IMR-90 (cell line): ENCODE measurements at regions of chr3 and their contacts with region 1.

Region 1: DNA sequence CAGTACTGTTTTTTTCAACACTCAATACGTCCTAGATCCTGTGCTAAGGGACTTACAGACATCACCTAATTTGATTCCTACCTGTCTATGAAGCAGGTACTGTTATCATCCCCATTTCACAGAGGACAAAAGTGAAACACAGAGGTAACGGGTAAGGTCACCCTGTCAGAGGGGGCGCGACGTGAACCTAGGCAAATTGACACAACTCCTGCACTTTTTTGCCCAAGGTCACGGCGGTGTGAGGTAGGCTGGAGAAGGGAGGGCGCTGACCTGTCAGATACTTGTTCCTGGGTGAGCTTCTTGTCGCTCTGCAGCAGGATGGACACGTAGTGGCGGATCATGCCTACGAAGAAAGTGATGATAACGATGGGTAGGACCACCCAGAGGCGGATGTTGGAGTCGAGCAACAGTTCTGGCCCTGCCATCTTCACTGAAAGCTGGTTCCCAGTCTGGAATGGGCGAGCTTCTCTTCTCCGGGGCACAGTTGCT is 360 bp downstream of the EMC3 start:
- DNase-seq: no peak
- ATAC-seq: peak; percentile 54
- H3K4me3 ChIP-seq: peak overlapping the region; percentile 74
- H3K27ac ChIP-seq: peak overlapping the region; percentile 66
- H3K4me1 ChIP-seq: peaks cover 2% of the 10 kb centered on the region
- H3K27me3 ChIP-seq: no peaks in the 10 kb centered on the region
- CTCF ChIP-seq: no peak
- POLR2A ChIP-seq: no peak
- RAD21 ChIP-seq: no peak

Region 2: DNA sequence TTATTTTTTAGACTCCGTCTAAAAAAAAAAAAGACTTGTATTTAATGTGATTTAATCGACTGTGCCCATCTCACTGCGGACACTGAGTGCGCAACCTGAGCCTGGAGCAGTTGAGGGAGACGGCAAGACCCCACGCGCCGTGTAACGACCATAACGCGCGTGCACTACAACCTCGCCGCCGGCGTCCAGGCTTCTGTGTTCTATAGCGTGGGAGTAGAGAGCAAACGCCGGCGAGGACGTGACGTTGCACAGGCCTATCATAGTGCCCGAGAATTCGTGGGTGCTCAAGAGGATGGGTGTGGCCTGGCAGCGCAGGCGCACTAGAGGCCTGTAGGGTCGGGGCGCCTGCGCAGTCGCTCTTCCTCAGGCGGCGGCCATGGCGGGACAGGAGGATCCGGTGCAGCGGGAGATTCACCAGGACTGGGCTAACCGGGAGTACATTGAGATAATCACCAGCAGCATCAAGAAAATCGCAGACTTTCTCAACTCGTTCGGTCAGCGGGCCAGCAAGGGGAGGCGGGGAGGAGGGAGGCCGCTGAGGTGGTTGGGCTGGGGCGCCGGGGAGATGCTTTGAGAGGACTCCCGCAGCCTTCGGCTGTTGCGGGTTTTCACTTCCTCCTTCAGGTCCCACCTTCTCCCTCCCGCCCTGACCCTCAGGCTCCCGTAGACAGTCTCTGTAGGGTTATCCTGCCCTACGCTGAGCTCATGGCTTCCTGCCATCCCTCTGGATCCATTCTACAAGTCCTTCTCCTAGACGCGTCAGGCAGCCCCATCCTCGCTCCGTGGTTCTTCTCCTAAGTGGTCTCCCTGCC is 129.3 kb after region 1 on chr3 and contains the start of gene BRK1:
- CTCF ChIA-PET with region 1: no interaction called
- POLR2A ChIA-PET with region 1: no interaction called
- dilution Hi-C with region 1: no loop called
- in situ Hi-C with region 1: no loop called
- intact Hi-C with region 1: loop called (anchors 10 kb)
- DNase-seq: peak; percentile 97
- ATAC-seq: peak; percentile 98
- H3K4me3 ChIP-seq: peak within 1 kb of the TSS; percentile 72
- H3K27ac ChIP-seq: peak within 1 kb of the TSS; percentile 95
- H3K4me1 ChIP-seq: peaks cover 2% of the 10 kb centered on the region; the same call in 1 of the 2 replicates
- H3K27me3 ChIP-seq: no peaks in the 10 kb centered on the region
- CTCF ChIP-seq: no peak
- POLR2A ChIP-seq: peak; percentile 87
- RAD21 ChIP-seq: no peak
- total RNA-seq, gene BRK1: 81.4 and 123 TPM in 2 replicates

Region 3: DNA sequence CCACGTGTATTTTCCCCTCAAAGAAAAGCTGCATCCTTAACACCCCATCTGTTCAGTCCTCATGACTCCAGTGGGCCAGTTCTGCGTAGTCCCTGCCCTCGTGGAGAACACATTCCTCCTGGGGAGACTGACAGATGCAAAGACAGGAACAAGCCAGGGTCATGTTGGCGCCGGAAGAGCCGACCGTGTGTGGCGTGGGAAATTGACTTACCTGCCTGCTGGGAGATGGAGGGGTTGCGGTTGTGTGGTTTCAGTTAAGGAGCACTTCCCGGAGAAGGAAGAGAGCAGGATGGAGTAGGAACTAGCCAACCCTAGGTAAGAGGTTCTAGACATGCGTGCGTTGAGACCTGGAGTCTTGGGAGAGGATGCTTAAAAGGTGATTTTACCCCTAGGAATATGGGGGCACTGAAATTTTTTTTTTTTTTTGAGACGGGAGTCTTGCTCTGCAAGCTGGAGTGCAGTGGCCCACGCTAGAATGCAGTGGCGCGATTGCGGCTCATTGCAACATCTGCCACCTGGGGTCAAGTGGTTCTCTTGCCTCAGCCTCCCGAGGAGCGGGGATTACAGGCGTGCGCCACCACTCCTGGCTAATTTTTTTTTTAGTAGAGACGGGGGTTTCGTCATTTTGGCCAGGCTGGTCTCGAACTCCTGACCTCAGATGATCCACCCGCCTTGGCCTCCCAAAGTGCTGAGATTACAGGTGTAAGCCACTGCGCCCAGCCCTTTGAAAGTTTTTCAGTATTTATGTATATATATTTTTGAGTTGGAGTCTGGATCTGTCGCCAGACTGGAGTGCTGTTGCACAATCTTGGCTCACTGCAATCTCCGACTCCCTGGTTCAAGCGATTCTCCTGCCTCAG is 156.7 kb after region 1 on chr3:
- CTCF ChIA-PET with region 1: no interaction called
- POLR2A ChIA-PET with region 1: no interaction called
- dilution Hi-C with region 1: no loop called
- in situ Hi-C with region 1: no loop called
- intact Hi-C with region 1: loop called (anchors 10 kb)
- DNase-seq: no peak
- ATAC-seq: no peak
- H3K4me3 ChIP-seq: peak overlapping the region; percentile 71
- H3K27ac ChIP-seq: no peak overlapping the region
- H3K4me1 ChIP-seq: peaks cover 7% of the 10 kb centered on the region
- H3K27me3 ChIP-seq: no peaks in the 10 kb centered on the region
- CTCF ChIP-seq: no peak
- POLR2A ChIP-seq: no peak
- RAD21 ChIP-seq: no peak